ENCODE measurements at regions of chr17 and their contacts with region 1.

Region 1: DNA sequence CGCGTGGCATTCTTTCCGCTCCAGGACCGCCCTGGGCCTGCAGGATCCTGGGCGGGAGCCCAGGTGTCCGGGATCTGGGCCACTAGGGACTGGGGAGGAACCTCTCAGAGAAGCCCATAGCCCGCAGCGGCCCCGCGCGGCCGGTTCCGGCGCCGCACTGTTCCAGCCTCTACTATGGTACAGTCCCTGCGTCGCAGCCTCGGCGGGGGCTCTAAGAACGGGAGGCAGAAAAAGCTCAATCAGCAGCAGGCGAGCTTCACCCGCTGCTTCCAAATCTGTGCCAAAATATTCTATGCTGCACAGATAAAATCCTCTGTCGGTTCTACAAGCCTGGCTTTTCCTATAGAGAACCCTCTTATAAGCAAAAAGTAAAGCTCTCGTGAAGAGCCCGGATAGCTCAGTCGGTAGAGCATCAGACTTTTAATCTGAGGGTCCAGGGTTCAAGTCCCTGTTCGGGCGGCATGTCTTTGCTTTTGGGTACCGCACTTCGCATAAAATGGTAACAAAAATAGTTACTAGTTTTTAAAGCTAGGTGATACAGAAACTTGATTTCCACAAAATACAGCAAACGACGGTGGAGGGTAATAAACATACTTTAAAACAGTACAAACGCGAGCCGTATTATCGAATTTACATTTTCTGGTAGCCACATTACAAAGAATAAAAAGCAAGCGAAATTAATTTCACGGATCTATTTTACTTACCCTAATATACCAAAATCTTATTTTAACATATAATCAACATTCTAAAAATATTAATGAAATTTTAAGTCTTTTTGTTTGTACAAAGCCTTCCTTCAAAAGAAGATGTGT is 661 bp upstream of the ALOXE3 start:
- DNase-seq: peak; percentile 90 to 96
- ATAC-seq: peak; percentile 85
- H3K4me3 ChIP-seq: peak overlapping the region; percentile 20 to 39
- H3K27ac ChIP-seq: no peak overlapping the region
- H3K4me1 ChIP-seq: no peaks in the 10 kb centered on the region
- H3K27me3 ChIP-seq: no peaks in the 10 kb centered on the region

Region 2: DNA sequence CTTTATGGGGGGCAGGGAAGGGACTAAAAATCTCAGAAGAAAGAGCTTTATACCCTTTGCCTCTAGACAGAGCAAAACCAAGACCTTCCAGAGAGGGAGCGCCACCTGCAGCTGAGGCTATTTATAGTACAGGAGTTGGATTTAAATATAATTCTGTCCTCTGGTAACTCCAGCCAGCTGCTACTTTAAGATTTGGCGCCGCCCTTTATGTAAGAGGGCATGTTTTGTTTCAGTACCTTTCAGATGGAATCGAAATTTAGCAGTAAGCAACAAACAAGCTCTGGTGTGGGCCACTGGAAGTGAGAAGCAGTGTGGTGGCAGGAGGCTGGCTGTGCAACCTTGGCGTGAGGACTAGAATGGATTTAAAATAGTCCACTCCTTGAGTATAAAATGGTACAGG is 121.8 kb before region 1 on chr17:
- intact Hi-C with region 1: no loop called
- DNase-seq: no peak
- ATAC-seq: no peak
- H3K4me3 ChIP-seq: no peak overlapping the region
- H3K27ac ChIP-seq: no peak overlapping the region
- H3K4me1 ChIP-seq: no peaks in the 10 kb centered on the region
- H3K27me3 ChIP-seq: no peaks in the 10 kb centered on the region

Region 3: GRCh38 chr17:8057691-8058114 is 61.3 kb before region 1 on chr17:
- intact Hi-C with region 1: loop called in 1 of 2 experiments (anchors 10 kb)
- DNase-seq: peak in 1 of 2 donors; percentile 34
- ATAC-seq: peak; percentile 88
- H3K4me3 ChIP-seq: no peak overlapping the region
- H3K27ac ChIP-seq: no peak overlapping the region
- H3K4me1 ChIP-seq: no peaks in the 10 kb centered on the region
- H3K27me3 ChIP-seq: no peaks in the 10 kb centered on the region

Region 4: GRCh38 chr17:8076291-8077266 is 42.4 kb before region 1 on chr17:
- intact Hi-C with region 1: no loop called
- DNase-seq: peak; percentile 40 to 62
- ATAC-seq: no peak
- H3K4me3 ChIP-seq: no peak overlapping the region
- H3K27ac ChIP-seq: no peak overlapping the region
- H3K4me1 ChIP-seq: no peaks in the 10 kb centered on the region
- H3K27me3 ChIP-seq: no peaks in the 10 kb centered on the region

Region 5: GRCh38 chr17:8087075-8087944 is 31.7 kb before region 1 on chr17 and contains the start of gene ALOX12B:
- intact Hi-C with region 1: no loop called
- DNase-seq: no peak
- ATAC-seq: peak; percentile 8
- H3K4me3 ChIP-seq: no peak within 1 kb of the TSS
- H3K27ac ChIP-seq: no peak within 1 kb of the TSS
- H3K4me1 ChIP-seq: no peaks in the 10 kb centered on the region
- H3K27me3 ChIP-seq: peaks cover 0 to 2% of the 10 kb centered on the region in 2 donors
- total RNA-seq, gene ALOX12B: not detected

Region 6: DNA sequence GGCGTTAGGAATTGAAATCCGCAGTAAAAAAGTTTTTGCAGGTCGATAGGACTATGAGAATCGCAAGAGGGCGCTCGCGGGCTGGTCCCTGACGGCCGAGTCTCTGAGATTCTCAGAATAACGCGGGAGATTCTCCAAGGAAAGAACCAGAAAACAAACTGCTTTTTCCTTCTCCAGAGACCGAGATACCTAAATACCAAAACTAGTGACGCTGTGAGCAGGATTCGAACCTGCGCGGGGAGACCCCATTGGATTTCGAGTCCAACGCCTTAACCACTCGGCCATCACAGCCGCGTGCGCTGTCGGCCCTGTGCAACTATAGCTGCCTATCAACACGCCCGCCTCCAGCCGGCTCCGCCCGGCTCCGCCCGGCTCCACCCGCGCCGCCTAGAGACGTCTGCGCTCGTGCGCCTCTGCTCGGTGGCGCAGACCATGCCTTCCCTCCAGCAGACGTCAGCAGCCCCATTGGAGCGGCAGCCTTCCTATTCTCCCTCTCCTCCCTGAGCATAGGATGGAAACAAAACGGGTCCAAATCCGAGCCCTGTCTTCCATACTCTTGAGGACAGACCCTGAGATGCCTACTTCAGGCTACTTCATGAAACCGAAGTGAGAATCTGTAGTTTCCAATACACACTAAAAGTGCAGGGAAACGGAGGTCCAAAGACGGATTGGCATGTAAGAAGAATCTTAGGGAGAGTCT is 19.8 kb after region 1 on chr17:
- intact Hi-C with region 1: loop called in 1 of 2 experiments (anchors 2 kb)
- DNase-seq: peak; percentile 97 to 98
- ATAC-seq: peak; percentile 95
- H3K4me3 ChIP-seq: no peak overlapping the region
- H3K27ac ChIP-seq: peak overlapping the region in 1 of 2 donors; percentile 26
- H3K4me1 ChIP-seq: peaks cover 0 to 1% of the 10 kb centered on the region in 2 donors
- H3K27me3 ChIP-seq: no peaks in the 10 kb centered on the region

Region 7: GRCh38 chr17:8162233-8162996 is 43.4 kb after region 1 on chr17 and contains the start of gene VAMP2:
- intact Hi-C with region 1: loop called in 1 of 2 experiments (anchors 5 kb)
- DNase-seq: peak; percentile 90 to 95
- ATAC-seq: peak; percentile 75
- H3K4me3 ChIP-seq: peak within 1 kb of the TSS; percentile 66 to 95
- H3K27ac ChIP-seq: peak within 1 kb of the TSS; percentile 61 to 89
- H3K4me1 ChIP-seq: no peaks in the 10 kb centered on the region
- H3K27me3 ChIP-seq: no peaks in the 10 kb centered on the region
- total RNA-seq, gene VAMP2: 73.4 to 80.8 TPM

Region 8: DNA sequence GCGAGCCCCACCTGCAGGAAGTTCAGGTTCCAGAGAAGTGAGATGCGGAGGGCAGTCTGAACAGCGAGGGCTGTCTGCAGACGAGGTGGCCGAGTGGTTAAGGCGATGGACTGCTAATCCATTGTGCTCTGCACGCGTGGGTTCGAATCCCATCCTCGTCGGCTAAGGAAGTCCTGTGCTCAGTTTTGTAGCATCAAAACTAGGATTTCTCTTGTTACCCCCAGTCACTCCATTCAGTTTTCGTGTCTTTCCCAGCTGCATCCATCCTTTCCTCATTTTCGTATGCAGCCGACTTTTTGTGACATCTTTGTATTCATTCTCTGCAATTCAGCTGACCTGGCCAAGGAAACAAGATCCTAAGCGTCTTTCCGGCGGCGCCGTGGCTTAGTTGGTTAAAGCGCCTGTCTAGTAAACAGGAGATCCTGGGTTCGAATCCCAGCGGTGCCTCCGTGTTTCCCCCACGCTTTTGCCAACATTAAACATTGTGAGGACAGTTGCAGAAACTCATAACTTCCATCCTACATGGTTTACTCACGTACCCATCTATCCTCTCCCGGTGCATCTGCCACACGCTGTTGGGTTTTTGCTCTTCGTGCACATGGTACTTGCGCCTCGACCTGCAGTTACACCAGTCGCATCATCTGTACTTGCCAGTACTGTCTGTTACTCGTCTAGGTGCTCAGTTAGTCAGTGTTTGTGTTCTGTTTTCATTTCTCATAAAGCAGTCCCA is 68.0 kb after region 1 on chr17:
- intact Hi-C with region 1: loop called (anchors 1 to 2 kb)
- DNase-seq: peak; percentile 93 to 95
- ATAC-seq: peak; percentile 89
- H3K4me3 ChIP-seq: peak overlapping the region in 1 of 2 donors; percentile 53
- H3K27ac ChIP-seq: peak overlapping the region in 1 of 2 donors; percentile 90
- H3K4me1 ChIP-seq: no peaks in the 10 kb centered on the region
- H3K27me3 ChIP-seq: no peaks in the 10 kb centered on the region

Region 9: DNA sequence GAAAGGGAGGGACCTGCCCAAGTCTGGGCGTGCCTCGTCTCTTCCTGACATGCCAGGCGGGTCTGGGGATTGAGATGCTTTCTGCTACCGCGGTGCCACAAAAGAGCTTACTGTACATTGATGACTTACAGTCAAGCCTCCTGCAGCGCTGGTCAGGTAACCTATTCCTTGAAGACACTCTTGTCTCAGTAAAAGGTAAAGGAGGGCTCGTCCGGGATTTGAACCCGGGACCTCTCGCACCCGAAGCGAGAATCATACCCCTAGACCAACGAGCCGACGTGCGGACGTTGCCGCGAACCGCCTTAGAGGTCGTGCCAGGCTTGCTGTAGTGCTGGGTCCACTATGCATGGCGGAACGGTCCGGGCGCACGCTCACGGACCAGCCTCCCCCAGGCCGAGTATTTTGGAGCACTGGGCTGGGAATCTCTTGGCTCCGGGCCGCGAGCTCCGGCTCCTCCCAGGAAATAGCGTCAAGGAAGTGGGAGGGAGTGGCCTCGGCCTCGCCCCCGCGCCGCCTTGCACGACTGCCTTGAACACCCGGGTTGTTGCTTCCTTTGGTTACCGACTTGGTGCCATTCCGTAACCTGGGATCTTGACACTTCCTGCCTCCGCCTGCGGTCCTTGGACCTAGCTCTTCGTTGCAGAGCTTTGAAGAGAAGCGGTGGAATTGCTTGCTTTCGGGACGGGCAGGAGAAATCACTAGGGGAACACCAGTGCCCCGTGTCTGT is 103.8 kb after region 1 on chr17:
- intact Hi-C with region 1: loop called (anchors 1 to 2 kb)
- DNase-seq: peak; percentile 97
- ATAC-seq: peak; percentile 88
- H3K4me3 ChIP-seq: peak overlapping the region; percentile 48 to 62
- H3K27ac ChIP-seq: peak overlapping the region; percentile 40 to 95
- H3K4me1 ChIP-seq: no peaks in the 10 kb centered on the region
- H3K27me3 ChIP-seq: no peaks in the 10 kb centered on the region